MCF 10A (cell line): ENCODE measurements at regions of chr1 and their contacts with region 1.

Region 1: DNA sequence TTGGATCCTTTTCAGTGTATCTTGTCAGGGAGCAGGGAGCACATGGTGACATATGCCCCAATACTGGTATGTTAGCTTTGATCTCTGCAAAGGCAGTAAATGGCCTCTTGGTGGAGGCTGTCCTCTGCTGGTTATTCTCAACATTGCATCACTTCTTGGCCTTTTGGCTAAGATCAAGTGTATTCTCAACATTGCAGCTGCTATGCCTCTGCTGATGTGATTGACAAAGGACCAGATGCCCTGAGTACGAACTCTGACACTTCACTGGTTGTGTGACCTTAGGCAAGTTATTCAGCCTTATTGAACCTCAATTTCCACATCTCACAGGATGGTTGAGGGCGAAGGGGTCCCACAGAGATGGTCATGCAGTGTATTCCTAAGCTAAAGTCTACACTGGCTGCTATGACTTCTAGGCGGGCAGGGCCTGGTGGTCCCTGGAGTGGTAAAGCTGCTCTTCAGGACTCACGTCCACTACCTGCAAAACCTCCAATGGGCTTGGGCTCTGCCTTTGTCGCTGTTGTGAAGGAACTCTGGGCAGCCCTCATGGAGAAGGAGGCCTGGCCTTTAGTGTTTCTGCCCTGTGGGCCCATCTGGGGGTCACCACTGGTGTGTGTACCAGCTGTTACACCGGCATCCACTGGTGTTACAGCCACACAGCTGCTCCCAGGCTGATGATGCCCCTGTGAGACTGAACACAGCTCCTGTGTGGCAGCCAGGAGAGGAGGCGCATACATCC is 64.8 kb downstream of the DNTTIP2 start:
- DNase-seq: peak; percentile 90
- H3K4me3 Mint-ChIP-seq: no peak overlapping the region
- H3K27ac Mint-ChIP-seq: no peak overlapping the region
- H3K4me1 Mint-ChIP-seq: peaks cover 52% of the 10 kb centered on the region
- H3K27me3 Mint-ChIP-seq: no peaks in the 10 kb centered on the region
- CTCF ChIP-seq: peak; percentile 97

Region 2: GRCh38 chr1:93304716-93305138 is 509.5 kb before region 1 on chr1:
- CTCF ChIA-PET with region 1: interaction called, 14 read pairs
- POLR2A ChIA-PET with region 1: no interaction called
- intact Hi-C with region 1: no loop called
- DNase-seq: peak; percentile 80
- H3K4me3 Mint-ChIP-seq: no peak overlapping the region
- H3K27ac Mint-ChIP-seq: no peak overlapping the region
- H3K4me1 Mint-ChIP-seq: no peaks in the 10 kb centered on the region
- H3K27me3 Mint-ChIP-seq: no peaks in the 10 kb centered on the region
- CTCF ChIP-seq: peak; percentile 81

Region 3: DNA sequence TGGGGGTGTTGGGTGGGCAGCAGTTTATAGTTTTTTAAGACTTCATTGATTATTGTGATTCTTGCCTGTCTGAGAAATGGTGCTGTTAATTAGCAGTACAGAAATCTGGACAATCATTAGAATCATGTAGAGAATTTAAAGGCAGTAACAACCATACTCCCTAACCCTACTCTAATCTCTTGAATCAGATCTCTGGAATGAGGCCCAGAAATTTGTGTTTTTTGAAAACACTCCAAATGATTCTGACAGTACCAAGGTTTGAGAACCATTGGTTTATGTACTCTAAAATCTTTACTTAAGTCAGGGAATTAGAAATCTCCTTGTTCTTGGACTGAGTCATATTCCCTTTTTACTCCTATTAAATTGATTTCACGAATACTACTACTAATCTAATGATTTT is 342.3 kb before region 1 on chr1:
- CTCF ChIA-PET with region 1: no interaction called
- POLR2A ChIA-PET with region 1: no interaction called
- intact Hi-C with region 1: no loop called
- DNase-seq: peak; percentile 72
- H3K4me3 Mint-ChIP-seq: no peak overlapping the region
- H3K27ac Mint-ChIP-seq: no peak overlapping the region
- H3K4me1 Mint-ChIP-seq: peaks cover 19% of the 10 kb centered on the region
- H3K27me3 Mint-ChIP-seq: no peaks in the 10 kb centered on the region
- CTCF ChIP-seq: no peak

Region 4: DNA sequence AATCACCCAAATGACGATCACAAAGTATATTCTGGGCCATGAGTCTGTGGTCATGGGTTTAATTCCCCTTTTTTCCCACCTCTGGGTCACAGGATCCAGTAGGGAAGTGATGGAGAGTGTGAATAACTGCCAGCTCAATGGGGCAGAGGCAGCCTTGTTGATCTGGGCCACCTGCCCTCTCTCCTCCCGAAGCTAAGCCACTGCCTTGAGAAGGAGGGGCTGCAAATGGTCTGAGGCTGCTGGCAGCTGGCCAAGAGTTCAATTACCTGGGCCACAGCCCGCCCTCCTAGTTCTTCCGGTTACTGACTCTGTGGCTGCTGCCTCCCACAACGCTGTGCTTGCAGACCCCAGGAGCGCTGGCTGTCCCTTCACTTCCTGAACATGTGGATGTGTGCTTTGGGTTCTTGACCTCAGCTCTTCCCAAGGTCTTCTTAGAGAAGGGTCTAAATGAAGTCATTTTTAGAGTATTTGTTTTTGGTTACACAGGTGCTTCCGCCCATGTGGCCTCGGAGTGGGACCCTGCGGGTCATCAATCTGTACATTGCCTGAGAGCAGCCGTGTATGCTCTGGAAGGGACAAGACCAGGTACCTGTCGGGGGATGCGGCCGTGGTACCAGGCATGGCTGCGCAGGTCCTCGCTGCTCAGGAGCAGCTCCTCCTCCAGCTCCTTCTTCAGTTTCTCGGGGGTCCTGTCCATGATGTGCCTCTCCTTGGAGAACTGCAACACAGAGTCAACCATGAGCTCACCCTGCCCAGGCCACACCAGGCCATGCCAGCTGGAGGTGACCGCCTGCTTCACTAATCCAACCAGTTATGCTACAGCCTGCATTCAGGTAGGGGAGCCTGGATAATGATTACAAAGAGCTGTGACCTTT is 222.3 kb before region 1 on chr1:
- CTCF ChIA-PET with region 1: interaction called, 24 read pairs
- POLR2A ChIA-PET with region 1: interaction called, 4 read pairs
- intact Hi-C with region 1: no loop called
- DNase-seq: peak; percentile 46
- H3K4me3 Mint-ChIP-seq: no peak overlapping the region
- H3K27ac Mint-ChIP-seq: peak overlapping the region; percentile 49
- H3K4me1 Mint-ChIP-seq: peaks cover 59% of the 10 kb centered on the region
- H3K27me3 Mint-ChIP-seq: no peaks in the 10 kb centered on the region
- CTCF ChIP-seq: no peak

Region 5: GRCh38 chr1:93661829-93662474 is 152.3 kb before region 1 on chr1:
- CTCF ChIA-PET with region 1: interaction called, 16 read pairs
- POLR2A ChIA-PET with region 1: interaction called, 14 read pairs
- intact Hi-C with region 1: no loop called
- DNase-seq: peak; percentile 46
- H3K4me3 Mint-ChIP-seq: peak overlapping the region; percentile 43
- H3K27ac Mint-ChIP-seq: peak overlapping the region; percentile 91
- H3K4me1 Mint-ChIP-seq: peaks cover 60% of the 10 kb centered on the region
- H3K27me3 Mint-ChIP-seq: no peaks in the 10 kb centered on the region
- CTCF ChIP-seq: no peak

Region 6: DNA sequence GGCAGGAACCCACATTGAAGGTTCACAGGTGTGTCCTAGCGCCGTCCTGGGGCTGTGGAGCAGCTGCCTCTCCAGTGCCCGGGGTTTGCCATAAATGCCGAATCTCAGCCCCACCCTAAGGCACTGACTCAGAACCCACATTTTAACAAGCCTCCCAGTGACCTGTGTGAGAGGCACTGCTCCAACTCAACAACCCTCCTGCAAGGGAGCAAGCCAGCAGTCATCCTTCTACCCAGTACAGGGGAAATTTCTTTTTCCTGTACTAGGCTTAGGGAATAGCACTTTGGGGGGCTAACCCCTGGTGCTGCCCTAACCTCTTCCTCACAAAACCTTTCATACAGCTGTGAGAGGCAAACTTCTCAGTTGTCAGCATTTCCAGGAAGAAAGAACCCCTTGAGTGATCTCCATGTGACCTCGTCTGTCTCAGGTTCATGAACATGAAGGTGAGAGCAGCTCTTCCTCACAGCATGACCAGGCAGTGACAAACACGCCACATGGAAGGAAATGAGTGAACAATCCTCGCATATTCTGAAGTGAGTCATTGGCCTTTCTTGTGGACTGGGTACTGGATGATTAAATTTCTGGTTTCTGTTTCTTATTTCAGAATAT is 121.1 kb before region 1 on chr1:
- CTCF ChIA-PET with region 1: interaction called, 29 read pairs
- POLR2A ChIA-PET with region 1: interaction called, 20 read pairs
- intact Hi-C with region 1: no loop called
- DNase-seq: peak; percentile 86
- H3K4me3 Mint-ChIP-seq: no peak overlapping the region
- H3K27ac Mint-ChIP-seq: no peak overlapping the region
- H3K4me1 Mint-ChIP-seq: no peaks in the 10 kb centered on the region
- H3K27me3 Mint-ChIP-seq: no peaks in the 10 kb centered on the region
- CTCF ChIP-seq: no peak

Region 7: GRCh38 chr1:93779540-93780192 is 34.6 kb before region 1 on chr1:
- CTCF ChIA-PET with region 1: interaction called, 47 read pairs
- POLR2A ChIA-PET with region 1: interaction called, 56 read pairs
- intact Hi-C with region 1: loop called (anchors 1 kb)
- DNase-seq: peak; percentile 100
- H3K4me3 Mint-ChIP-seq: peak overlapping the region; percentile 44
- H3K27ac Mint-ChIP-seq: peak overlapping the region; percentile 92
- H3K4me1 Mint-ChIP-seq: peaks cover 51% of the 10 kb centered on the region
- H3K27me3 Mint-ChIP-seq: no peaks in the 10 kb centered on the region
- CTCF ChIP-seq: no peak